ENCODE measurements at regions of chr5 and their contacts with region 1.

Region 1: DNA sequence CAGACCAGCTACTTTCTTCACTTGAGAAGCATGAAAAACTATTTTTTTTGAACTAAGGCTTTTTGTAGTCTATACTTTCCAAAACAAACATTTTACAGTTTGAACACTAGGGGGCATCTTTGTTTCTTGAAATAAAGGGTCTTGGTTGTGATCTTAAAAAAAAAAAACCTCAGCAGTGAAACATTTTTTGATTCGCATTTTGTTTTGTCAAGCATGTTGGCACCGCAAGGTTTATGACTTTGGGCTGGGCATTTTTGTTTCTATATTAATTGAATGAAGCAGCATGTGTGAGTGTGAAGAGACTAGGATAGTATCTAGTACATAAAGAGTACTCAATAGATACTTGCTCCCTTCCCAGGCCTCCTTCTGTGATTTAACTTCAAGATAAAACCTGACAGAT is 31.6 kb upstream of the ACOT12 start:
- DNase-seq: peak; percentile 34
- H3K4me3 ChIP-seq: no peak overlapping the region
- CTCF ChIP-seq: peak; percentile 29

Region 2: GRCh38 chr5:80686757-80687156 is 738.8 kb before region 1 on chr5:
- in situ Hi-C with region 1: no loop called
- DNase-seq: peak; percentile 12
- H3K4me3 ChIP-seq: no peak overlapping the region
- CTCF ChIP-seq: no peak

Region 3: DNA sequence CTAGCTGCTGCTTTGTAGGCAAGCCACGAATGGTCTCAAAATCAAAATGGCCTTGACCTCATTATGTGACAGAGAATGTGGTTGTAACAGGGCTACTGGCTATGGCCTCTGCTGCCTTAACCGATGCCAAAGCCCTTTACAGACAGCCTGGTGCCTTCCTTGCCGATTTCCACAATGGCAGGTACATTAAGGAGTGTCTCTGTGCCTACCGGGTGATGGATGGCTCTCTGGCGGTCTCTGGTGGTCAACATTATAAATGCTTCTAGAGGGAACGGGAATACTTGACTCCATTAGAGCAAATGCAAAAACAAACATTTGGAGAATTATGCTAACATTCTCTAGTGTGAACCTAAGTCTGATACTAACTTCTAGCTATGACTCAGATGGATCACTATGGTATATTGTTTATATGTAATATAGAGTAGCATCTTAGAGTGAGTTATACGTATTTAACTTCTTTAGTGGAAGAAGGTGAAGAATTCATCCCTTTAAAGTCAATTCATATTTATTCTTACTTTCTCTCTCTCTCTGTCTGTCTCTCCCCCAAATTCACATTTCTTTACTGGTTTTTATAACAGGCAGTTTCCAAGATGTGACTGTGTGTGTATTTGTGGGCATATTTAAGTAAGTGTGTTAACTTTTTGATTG is 800.1 kb after region 1 on chr5:
- in situ Hi-C with region 1: loop called (anchors 25 kb)
- DNase-seq: peak; percentile 44
- H3K4me3 ChIP-seq: no peak overlapping the region
- CTCF ChIP-seq: peak; percentile 79